Gastrocnemius medialis (tissue), 4 donors: ENCODE measurements at regions of chr9 and their contacts with region 1.

Region 1: DNA sequence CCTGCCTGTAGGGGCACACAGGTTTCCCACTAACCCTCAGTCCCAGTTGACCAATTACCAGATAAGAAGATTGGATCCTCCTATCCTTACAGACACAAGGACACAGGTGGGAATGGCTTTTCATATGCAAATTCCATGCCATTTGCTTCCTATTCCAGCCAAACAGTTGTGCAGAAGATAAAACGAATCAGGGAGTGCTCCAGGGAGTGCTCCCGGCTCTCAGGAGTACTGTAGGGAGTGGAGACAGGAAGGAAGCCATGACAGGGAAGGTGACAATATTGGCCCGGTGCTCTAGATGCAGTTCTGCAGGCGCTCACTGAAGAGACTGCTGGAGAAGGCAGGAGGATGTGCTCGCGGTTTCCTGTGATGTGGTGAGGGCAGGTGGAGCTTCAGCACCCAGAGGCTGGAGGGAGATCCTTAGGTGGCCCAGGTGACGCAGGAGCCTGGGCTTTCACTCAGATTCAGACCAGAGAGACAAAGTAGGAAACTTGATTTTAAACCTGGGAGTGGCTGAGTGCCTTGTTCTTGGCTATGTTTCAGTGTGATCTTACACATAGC is 260.0 kb downstream of the AUH start:
- DNase-seq: peak in 1 of 2 donors; percentile 49
- ATAC-seq: no peak
- H3K4me3 ChIP-seq: no peak overlapping the region
- H3K27ac ChIP-seq: peak overlapping the region; percentile 81 to 89 (median 84)
- H3K4me1 ChIP-seq: peaks cover 23 to 35% of the 10 kb centered on the region in 2 donors
- H3K27me3 ChIP-seq: no peaks in the 10 kb centered on the region
- CTCF ChIP-seq: no peak
- POLR2A ChIP-seq: no peak

Region 2: GRCh38 chr9:91060503-91061343 is 41.0 kb before region 1 on chr9:
- in situ Hi-C with region 1: no loop called
- intact Hi-C with region 1: loop called (anchors 2 kb)
- DNase-seq: peak; percentile 70 to 81
- ATAC-seq: peak; percentile 71 to 73
- H3K4me3 ChIP-seq: no peak overlapping the region
- H3K27ac ChIP-seq: peak overlapping the region; percentile 82 to 87 (median 84)
- H3K4me1 ChIP-seq: peaks cover 42 to 43% of the 10 kb centered on the region in 2 donors
- H3K27me3 ChIP-seq: no peaks in the 10 kb centered on the region
- CTCF ChIP-seq: no peak
- POLR2A ChIP-seq: peak in 1 of 2 donors; percentile 12

Region 3: GRCh38 chr9:91071185-91071990 is 30.3 kb before region 1 on chr9:
- in situ Hi-C with region 1: no loop called
- intact Hi-C with region 1: loop called (anchors 1 kb)
- DNase-seq: peak; percentile 85 to 91
- ATAC-seq: peak; percentile 93 to 94
- H3K4me3 ChIP-seq: no peak overlapping the region
- H3K27ac ChIP-seq: peak overlapping the region; percentile 82 to 92 (median 87)
- H3K4me1 ChIP-seq: peaks cover 26 to 31% of the 10 kb centered on the region in 2 donors
- H3K27me3 ChIP-seq: no peaks in the 10 kb centered on the region
- CTCF ChIP-seq: no peak
- POLR2A ChIP-seq: peak; percentile 46 to 51

Region 4: DNA sequence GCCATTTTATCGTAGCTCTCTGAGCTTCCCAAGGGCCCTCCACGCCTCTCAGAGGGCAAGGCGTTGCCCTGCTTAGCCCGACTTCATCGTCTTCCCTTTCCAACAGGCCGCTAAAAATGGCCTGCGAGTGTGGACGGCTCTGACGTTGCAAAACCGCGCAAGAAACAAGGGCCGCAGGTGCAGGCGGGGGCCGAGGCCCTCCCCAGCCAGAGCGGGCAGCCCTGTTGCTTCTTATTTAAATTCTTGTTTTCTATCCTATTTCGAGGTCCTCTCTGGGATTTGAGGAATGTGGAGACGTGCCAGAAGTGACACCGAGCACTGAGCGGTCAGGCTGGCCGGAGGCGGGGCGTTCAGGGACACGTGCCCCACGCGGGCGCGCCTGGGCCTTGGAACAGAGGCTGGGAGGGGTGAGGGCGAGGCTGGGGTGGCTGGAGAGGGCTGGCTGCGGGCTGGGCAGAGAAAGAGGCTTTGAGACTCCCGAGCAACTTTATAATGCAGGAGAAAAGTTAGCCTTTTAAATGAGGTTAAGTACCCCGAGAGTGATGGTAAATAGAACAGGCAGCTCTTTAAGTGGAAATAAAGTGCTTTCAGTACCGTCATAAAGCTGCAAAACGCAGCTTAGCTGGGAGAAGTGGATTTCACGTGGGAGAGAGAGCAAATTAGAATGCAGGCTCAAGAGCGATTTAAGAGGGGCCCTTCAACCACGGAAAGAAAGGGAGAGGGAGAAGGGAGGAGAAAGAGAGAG is 16.4 kb after region 1 on chr9:
- in situ Hi-C with region 1: no loop called
- intact Hi-C with region 1: loop called (anchors 2 kb)
- DNase-seq: peak; percentile 84 to 90
- ATAC-seq: peak; percentile 86 to 89
- H3K4me3 ChIP-seq: peak overlapping the region; percentile 41 to 50 (median 42)
- H3K27ac ChIP-seq: peak overlapping the region; percentile 80 to 90 (median 82)
- H3K4me1 ChIP-seq: peaks cover 25 to 32% of the 10 kb centered on the region in 2 donors
- H3K27me3 ChIP-seq: no peaks in the 10 kb centered on the region
- CTCF ChIP-seq: no peak
- POLR2A ChIP-seq: peak; percentile 55 to 70

Region 5: GRCh38 chr9:91301161-91301560 is 199.5 kb after region 1 on chr9:
- in situ Hi-C with region 1: no loop called
- intact Hi-C with region 1: loop called (anchors 2 kb)
- DNase-seq: no peak
- ATAC-seq: peak; percentile 34 to 42
- H3K4me3 ChIP-seq: no peak overlapping the region
- H3K27ac ChIP-seq: peak overlapping the region; percentile 78 to 90 (median 84)
- H3K4me1 ChIP-seq: peaks cover 61 to 68% of the 10 kb centered on the region in 2 donors
- H3K27me3 ChIP-seq: no peaks in the 10 kb centered on the region
- CTCF ChIP-seq: no peak
- POLR2A ChIP-seq: no peak